ENCODE measurements at regions of chr19 and their contacts with region 1.

Region 1: DNA sequence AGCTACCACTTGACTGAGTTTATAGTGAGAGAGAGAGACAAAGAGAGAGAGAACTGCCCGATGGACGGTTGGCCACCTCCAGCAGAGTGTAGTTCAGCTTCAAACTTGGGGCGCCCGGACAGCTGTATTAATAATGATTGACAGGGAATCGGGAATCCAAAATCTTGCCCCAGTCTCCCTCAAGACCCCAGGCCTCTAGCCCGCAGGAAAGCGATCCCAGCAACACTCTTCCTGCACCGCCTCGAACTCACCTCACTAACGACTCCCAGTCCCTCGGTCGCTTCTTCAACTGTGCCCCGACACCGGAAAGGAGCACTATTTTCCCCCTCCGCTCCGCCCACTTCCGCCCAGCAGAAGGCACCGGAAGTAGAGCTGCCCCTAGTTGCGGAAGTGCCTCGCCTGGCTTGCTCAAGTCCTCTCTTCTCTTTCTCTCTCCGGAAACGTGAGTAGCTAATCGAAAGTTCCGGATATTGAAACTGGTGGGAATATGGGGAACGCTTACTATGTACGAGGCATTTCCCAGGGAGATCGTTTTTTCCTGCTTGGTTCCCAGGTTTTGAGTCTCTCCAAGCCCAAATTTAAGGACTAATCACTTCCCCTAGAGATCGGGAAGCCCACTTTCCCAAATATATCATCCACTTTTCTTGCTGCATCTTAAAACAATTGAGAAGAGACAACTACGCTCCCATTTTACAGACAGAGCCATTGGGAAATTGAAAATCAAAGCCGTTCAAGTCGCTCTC is at the start of gene NOSIP:
- DNase-seq: peak; percentile 94 to 97 (median 97)
- ATAC-seq: peak; percentile 96 to 97
- H3K4me3 ChIP-seq: peak within 1 kb of the TSS; percentile 92
- H3K27ac ChIP-seq: peak within 1 kb of the TSS; percentile 86
- H3K4me1 ChIP-seq: peaks cover 4% of the 10 kb centered on the region
- H3K27me3 ChIP-seq: no peaks in the 10 kb centered on the region
- total RNA-seq, gene NOSIP: 46.1 to 50.8 (median 48.3) TPM

Region 2: DNA sequence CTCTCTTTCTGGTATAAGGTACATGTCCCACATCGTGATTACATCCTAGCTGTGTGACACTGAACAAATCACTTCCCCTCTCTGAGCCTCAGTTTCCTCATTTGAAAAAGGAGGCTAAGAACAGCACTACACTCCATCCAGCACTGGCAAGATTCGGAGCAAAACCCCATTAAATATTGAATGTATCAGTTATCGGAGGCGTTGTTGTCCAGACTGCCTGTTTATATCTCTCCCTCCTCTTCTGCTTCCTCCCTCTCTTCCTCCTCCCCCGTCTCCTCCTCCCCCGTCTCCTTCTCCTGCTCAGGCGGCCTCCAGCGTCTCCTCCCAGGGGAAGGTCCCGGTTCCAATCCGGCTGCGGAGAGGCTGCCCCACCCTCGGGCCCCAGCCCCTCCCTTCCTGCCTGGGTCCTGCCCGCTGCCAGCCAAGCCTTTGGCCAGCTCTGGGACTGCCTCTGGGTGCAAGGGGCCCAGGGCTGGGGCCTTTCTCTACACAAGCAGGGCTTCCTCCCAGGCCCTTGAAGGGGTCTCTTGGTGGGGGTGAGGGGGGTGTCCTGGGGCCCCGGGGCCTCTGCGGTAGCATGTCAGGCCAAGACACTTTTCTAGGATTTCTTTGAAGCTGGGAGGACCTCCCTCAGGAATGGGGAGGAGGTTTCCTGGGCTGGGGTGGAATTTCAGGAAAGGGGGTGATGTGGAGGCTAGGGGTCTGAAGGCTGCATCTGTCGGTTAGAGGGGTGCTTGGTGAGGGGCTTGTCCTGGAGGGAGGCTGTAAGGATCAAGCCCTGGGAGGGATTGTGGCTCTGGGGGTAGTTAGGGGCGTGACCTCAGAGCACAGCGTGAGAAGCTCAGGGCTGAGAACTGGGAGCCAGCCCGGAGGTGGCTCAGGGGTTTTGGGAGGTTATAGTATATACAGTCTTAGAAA is 57.6 kb after region 1 on chr19:
- intact Hi-C with region 1: loop called in 1 of 4 experiments (anchors 10 kb)
- DNase-seq: peak; percentile 94 to 97 (median 97)
- ATAC-seq: peak; percentile 18
- H3K4me3 ChIP-seq: peak overlapping the region; percentile 73
- H3K27ac ChIP-seq: peak overlapping the region; percentile 91
- H3K4me1 ChIP-seq: peaks cover 6% of the 10 kb centered on the region
- H3K27me3 ChIP-seq: no peaks in the 10 kb centered on the region

Region 3: GRCh38 chr19:49655570-49656455 is 75.4 kb after region 1 on chr19:
- intact Hi-C with region 1: no loop called
- DNase-seq: no peak
- ATAC-seq: no peak
- H3K4me3 ChIP-seq: no peak overlapping the region
- H3K27ac ChIP-seq: no peak overlapping the region
- H3K4me1 ChIP-seq: no peaks in the 10 kb centered on the region
- H3K27me3 ChIP-seq: no peaks in the 10 kb centered on the region